OCI-LY7 (cell line): ENCODE measurements at regions of chr2 and their contacts with region 1.

Region 1: GRCh38 chr2:237060534-237061312 is 25.0 kb upstream of the COPS8 start:
- DNase-seq: peak; percentile 83
- H3K4me3 ChIP-seq: peak overlapping the region; percentile 64
- H3K27ac ChIP-seq: peak overlapping the region; percentile 98
- H3K4me1 ChIP-seq: peaks cover 68% of the 10 kb centered on the region
- CTCF ChIP-seq: peak; percentile 91

Region 2: GRCh38 chr2:236352761-236353593 is 707.7 kb before region 1 on chr2:
- CTCF ChIA-PET with region 1: interaction called, 5 read pairs
- POLR2A ChIA-PET with region 1: no interaction called
- intact Hi-C with region 1: loop called (anchors 1 kb)
- DNase-seq: peak; percentile 64
- H3K4me3 ChIP-seq: no peak overlapping the region
- H3K27ac ChIP-seq: no peak overlapping the region
- H3K4me1 ChIP-seq: no peaks in the 10 kb centered on the region
- CTCF ChIP-seq: peak; percentile 99

Region 3: DNA sequence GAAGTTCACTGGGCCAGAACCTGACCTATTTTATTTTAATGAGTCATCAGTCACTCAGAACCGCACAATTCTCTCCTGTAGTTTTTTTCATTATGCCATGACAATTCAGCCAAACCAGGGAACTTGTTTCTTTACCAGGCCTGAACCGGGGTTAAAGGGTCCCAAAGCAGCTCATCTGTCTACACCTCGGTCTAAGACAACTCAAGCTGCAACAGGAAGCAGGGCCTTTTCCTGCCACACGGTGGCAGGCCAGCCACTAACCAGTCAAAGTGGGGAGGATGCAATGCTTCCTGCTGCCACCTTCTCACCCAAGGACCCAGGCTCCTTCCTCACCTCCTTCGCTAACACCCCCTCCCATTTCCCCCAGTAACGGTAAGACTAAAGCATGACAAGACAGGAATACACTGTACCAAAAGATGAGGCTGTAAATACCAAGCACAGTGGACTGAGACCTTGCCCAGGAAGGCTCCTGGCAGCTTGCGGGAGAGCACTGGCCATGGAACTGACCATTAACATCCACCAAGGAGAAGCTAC is 547.8 kb before region 1 on chr2:
- CTCF ChIA-PET with region 1: no interaction called
- POLR2A ChIA-PET with region 1: no interaction called
- intact Hi-C with region 1: loop called (anchors 1 kb)
- DNase-seq: peak; percentile 86
- H3K4me3 ChIP-seq: no peak overlapping the region
- H3K27ac ChIP-seq: no peak overlapping the region
- H3K4me1 ChIP-seq: peaks cover 12% of the 10 kb centered on the region
- CTCF ChIP-seq: peak; percentile 95

Region 4: DNA sequence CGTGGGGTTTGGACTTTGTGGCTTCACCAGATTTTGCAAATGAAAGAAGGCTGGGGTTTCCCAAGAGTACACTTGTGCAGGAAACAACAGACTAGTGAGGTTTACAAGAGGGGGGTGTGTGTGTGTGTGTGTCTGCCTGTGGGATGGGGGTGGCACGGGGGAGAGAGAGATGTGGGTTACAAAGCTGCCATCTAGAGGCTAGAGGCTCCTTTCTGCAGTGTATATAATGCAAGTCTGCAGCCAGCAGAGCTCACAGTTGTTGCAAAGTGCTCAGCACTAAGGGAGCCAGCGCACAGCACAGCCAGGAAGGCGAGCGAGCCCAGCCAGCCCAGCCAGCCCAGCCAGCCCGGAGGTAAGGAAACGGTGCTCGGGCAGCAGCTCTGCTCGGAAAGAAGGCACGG is 491.1 kb before region 1 on chr2 and contains the start of gene ACKR3:
- CTCF ChIA-PET with region 1: interaction called, 3 read pairs
- POLR2A ChIA-PET with region 1: interaction called, 6 read pairs
- intact Hi-C with region 1: loop called (anchors 1 kb)
- DNase-seq: peak; percentile 94
- H3K4me3 ChIP-seq: peak within 1 kb of the TSS; percentile 71
- H3K27ac ChIP-seq: peak within 1 kb of the TSS; percentile 67
- H3K4me1 ChIP-seq: peaks cover 73% of the 10 kb centered on the region
- CTCF ChIP-seq: peak; percentile 87
- total RNA-seq, gene ACKR3: 1.5 and 2.1 TPM in 2 replicates

Region 5: GRCh38 chr2:236939721-236940231 is 120.9 kb before region 1 on chr2:
- CTCF ChIA-PET with region 1: no interaction called
- POLR2A ChIA-PET with region 1: no interaction called
- intact Hi-C with region 1: no loop called
- DNase-seq: no peak
- H3K4me3 ChIP-seq: no peak overlapping the region
- H3K27ac ChIP-seq: no peak overlapping the region
- H3K4me1 ChIP-seq: no peaks in the 10 kb centered on the region
- CTCF ChIP-seq: no peak

Region 6: GRCh38 chr2:237000481-237000880 is 60.2 kb before region 1 on chr2:
- CTCF ChIA-PET with region 1: no interaction called
- POLR2A ChIA-PET with region 1: interaction called, 12 read pairs
- intact Hi-C with region 1: no loop called
- DNase-seq: no peak
- H3K4me3 ChIP-seq: no peak overlapping the region
- H3K27ac ChIP-seq: no peak overlapping the region
- H3K4me1 ChIP-seq: no peaks in the 10 kb centered on the region
- CTCF ChIP-seq: no peak

Region 7: GRCh38 chr2:237085248-237086221 is 24.8 kb after region 1 on chr2 and contains the start of gene COPS8:
- CTCF ChIA-PET with region 1: no interaction called
- POLR2A ChIA-PET with region 1: interaction called, 14 read pairs
- intact Hi-C with region 1: no loop called
- DNase-seq: peak; percentile 93
- H3K4me3 ChIP-seq: peak within 1 kb of the TSS; percentile 98
- H3K27ac ChIP-seq: peak within 1 kb of the TSS; percentile 76
- H3K4me1 ChIP-seq: peaks cover 13% of the 10 kb centered on the region
- CTCF ChIP-seq: peak; percentile 50
- total RNA-seq, gene COPS8: 113 and 117 TPM in 2 replicates

Region 8: GRCh38 chr2:237097911-237098702 is 37.4 kb after region 1 on chr2:
- CTCF ChIA-PET with region 1: no interaction called
- POLR2A ChIA-PET with region 1: no interaction called
- intact Hi-C with region 1: no loop called
- DNase-seq: no peak
- H3K4me3 ChIP-seq: no peak overlapping the region
- H3K27ac ChIP-seq: no peak overlapping the region
- H3K4me1 ChIP-seq: peaks cover 5% of the 10 kb centered on the region
- CTCF ChIP-seq: no peak